ENCODE measurements at regions of chr1 and their contacts with region 1.

Region 1: GRCh38 chr1:28526889-28527288 is 21.0 kb downstream of the RCC1 start:
- DNase-seq: peak in 2 of 6 donors; percentile 31 to 32
- ATAC-seq: peak; percentile 56 to 90 (median 78)
- H3K4me3 ChIP-seq: no peak overlapping the region
- H3K27ac ChIP-seq: peak overlapping the region in 3 of 4 donors; percentile 6 to 62 (median 53)
- H3K4me1 ChIP-seq: no peaks in the 10 kb centered on the region
- H3K27me3 ChIP-seq: no peaks in the 10 kb centered on the region
- CTCF ChIP-seq: no peak

Region 2: DNA sequence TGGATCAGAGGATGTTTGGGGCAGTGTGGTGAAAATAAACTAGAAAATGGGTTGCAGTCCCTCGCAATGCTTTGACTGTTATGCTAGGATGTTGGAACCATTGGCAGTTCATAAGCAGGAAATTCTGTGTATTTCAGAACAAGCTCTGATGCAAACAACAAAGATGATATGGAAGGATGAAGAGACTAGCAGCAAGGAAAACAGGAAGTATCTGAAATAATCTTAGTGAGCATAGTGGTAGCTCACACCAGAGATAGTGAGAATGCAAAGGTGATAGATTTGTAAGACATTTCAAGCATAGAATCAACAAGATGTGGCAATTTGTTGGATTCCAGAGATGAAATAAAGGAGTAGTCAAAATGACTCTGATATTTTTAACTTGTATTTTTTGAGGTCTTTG is 32.2 kb before region 1 on chr1:
- intact Hi-C with region 1: no loop called
- DNase-seq: no peak
- ATAC-seq: no peak
- H3K4me3 ChIP-seq: no peak overlapping the region
- H3K27ac ChIP-seq: no peak overlapping the region
- H3K4me1 ChIP-seq: no peaks in the 10 kb centered on the region
- H3K27me3 ChIP-seq: no peaks in the 10 kb centered on the region
- CTCF ChIP-seq: no peak

Region 3: DNA sequence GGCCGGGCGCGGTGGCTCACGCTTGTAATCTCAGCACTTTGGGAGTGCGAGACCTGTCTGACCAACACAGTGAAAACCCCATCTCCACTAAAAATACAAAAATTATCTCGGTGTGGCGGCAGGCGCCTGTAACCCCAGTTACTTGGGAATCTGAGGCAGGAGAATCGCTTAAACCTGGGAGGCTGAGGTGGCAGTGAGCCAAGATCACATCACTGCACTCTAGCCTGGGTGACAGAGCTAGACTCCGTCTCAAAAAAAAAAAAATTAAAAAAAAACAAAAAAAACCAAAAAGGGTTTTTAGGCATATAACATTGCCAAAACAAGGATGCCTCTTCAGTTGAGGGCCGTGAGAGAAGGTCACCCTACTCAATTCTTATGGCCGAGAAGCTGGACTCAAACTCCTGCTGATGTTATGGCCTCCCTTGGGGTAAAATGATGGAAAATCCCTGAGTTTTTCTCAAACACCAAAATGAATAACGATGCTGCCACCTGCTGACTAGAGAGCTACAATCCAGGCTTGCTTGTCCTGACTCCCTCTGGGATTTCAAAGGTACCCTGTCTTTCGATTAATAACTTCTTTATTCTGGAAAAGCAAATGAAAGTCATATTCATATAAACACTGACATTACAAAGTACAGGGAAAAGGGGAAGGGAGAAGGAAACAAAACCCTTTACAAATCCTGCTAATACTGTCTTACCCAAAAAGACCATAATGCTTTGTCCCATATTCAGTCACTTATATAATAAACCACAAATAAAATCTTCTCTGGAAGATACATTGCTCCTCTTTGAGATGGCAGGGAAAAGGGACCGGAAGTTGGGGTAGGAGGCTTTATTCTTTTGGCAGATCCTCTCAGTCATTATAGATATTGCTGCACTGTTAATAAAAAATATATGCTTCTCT is 75.9 kb after region 1 on chr1:
- intact Hi-C with region 1: loop called in 1 of 3 experiments (anchors 10 kb)
- DNase-seq: peak in 3 of 6 donors; percentile 43 to 66 (median 45)
- ATAC-seq: peak; percentile 46 to 87 (median 86)
- H3K4me3 ChIP-seq: no peak overlapping the region
- H3K27ac ChIP-seq: no peak overlapping the region
- H3K4me1 ChIP-seq: no peaks in the 10 kb centered on the region
- H3K27me3 ChIP-seq: no peaks in the 10 kb centered on the region
- CTCF ChIP-seq: peak in 3 of 4 donors; percentile 17 to 41 (median 39)